T-cell (primary cell): ENCODE measurements at regions of chr1 and their contacts with region 1.

Region 1: GRCh38 chr1:184805667-184806295 is 51.1 kb upstream of the EDEM3 start:
- DNase-seq: peak; percentile 48 to 92 (median 76)
- ATAC-seq: peak; percentile 90 to 96 (median 94)
- H3K4me3 ChIP-seq: no peak overlapping the region
- H3K4me3 Mint-ChIP-seq: no peak overlapping the region
- H3K27ac ChIP-seq: no peak overlapping the region
- H3K27ac Mint-ChIP-seq: peak overlapping the region; percentile 2 to 8
- H3K4me1 ChIP-seq: peaks cover 3 to 5% of the 10 kb centered on the region in 2 experiments
- H3K4me1 Mint-ChIP-seq: peaks cover 5 to 6% (median 6%) of the 10 kb centered on the region in 3 donors
- H3K27me3 ChIP-seq: no peaks in the 10 kb centered on the region
- H3K27me3 Mint-ChIP-seq: no peaks in the 10 kb centered on the region

Region 2: GRCh38 chr1:184424157-184424556 is 381.6 kb before region 1 on chr1:
- CTCF ChIA-PET with region 1: no interaction called
- POLR2A ChIA-PET with region 1: no interaction called
- DNase-seq: no peak
- ATAC-seq: no peak
- H3K4me3 ChIP-seq: no peak overlapping the region
- H3K4me3 Mint-ChIP-seq: no peak overlapping the region
- H3K27ac ChIP-seq: no peak overlapping the region
- H3K27ac Mint-ChIP-seq: no peak overlapping the region
- H3K4me1 ChIP-seq: no peaks in the 10 kb centered on the region
- H3K4me1 Mint-ChIP-seq: peaks cover 0 to 3% (median 0%) of the 10 kb centered on the region in 3 donors
- H3K27me3 ChIP-seq: no peaks in the 10 kb centered on the region
- H3K27me3 Mint-ChIP-seq: peaks cover 6 to 11% of the 10 kb centered on the region in 2 donors

Region 3: DNA sequence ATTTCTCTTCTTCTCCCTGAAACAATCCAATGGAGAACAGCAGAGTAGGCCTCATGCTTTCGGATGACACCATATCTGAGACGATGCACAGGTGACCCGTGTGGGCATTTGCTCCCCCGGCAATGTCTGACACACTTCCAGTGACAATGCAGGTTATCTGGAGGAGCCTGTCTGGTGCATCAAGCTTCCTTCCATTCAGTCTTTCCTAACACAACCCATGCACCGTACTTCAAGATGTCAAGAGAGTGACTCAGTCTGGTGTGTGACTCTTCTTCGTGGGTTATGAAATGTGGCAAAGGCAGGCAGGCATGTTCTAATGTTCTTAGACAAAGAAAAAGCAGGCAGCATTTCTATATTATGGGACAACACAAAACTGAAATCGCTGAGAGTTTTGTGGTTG is 210.2 kb before region 1 on chr1:
- CTCF ChIA-PET with region 1: no interaction called
- POLR2A ChIA-PET with region 1: no interaction called
- DNase-seq: no peak
- ATAC-seq: no peak
- H3K4me3 ChIP-seq: no peak overlapping the region
- H3K4me3 Mint-ChIP-seq: no peak overlapping the region
- H3K27ac ChIP-seq: no peak overlapping the region
- H3K27ac Mint-ChIP-seq: no peak overlapping the region
- H3K4me1 ChIP-seq: no peaks in the 10 kb centered on the region
- H3K4me1 Mint-ChIP-seq: no peaks in the 10 kb centered on the region
- H3K27me3 ChIP-seq: no peaks in the 10 kb centered on the region
- H3K27me3 Mint-ChIP-seq: peaks cover 0 to 3% of the 10 kb centered on the region in 2 donors

Region 4: GRCh38 chr1:184754476-184755225 is 51.1 kb before region 1 on chr1 and contains the start of gene EDEM3:
- CTCF ChIA-PET with region 1: interaction called, 5 to 11 read pairs
- POLR2A ChIA-PET with region 1: interaction called in 1 of 2 experiments, 7 read pairs
- DNase-seq: peak; percentile 89 to 100 (median 98)
- ATAC-seq: peak; percentile 92 to 95 (median 93)
- H3K4me3 ChIP-seq: peak within 1 kb of the TSS; percentile 84 to 95
- H3K4me3 Mint-ChIP-seq: peak within 1 kb of the TSS; percentile 83 to 90 (median 88)
- H3K27ac ChIP-seq: peak within 1 kb of the TSS; percentile 73
- H3K27ac Mint-ChIP-seq: peak within 1 kb of the TSS; percentile 75 to 88
- H3K4me1 ChIP-seq: peaks cover 5 to 18% of the 10 kb centered on the region in 2 experiments
- H3K4me1 Mint-ChIP-seq: peaks cover 41 to 54% (median 50%) of the 10 kb centered on the region in 3 donors
- H3K27me3 ChIP-seq: no peaks in the 10 kb centered on the region
- H3K27me3 Mint-ChIP-seq: no peaks in the 10 kb centered on the region
- total RNA-seq, gene EDEM3: 21.0 to 44.1 (median 39.1) TPM

Region 5: DNA sequence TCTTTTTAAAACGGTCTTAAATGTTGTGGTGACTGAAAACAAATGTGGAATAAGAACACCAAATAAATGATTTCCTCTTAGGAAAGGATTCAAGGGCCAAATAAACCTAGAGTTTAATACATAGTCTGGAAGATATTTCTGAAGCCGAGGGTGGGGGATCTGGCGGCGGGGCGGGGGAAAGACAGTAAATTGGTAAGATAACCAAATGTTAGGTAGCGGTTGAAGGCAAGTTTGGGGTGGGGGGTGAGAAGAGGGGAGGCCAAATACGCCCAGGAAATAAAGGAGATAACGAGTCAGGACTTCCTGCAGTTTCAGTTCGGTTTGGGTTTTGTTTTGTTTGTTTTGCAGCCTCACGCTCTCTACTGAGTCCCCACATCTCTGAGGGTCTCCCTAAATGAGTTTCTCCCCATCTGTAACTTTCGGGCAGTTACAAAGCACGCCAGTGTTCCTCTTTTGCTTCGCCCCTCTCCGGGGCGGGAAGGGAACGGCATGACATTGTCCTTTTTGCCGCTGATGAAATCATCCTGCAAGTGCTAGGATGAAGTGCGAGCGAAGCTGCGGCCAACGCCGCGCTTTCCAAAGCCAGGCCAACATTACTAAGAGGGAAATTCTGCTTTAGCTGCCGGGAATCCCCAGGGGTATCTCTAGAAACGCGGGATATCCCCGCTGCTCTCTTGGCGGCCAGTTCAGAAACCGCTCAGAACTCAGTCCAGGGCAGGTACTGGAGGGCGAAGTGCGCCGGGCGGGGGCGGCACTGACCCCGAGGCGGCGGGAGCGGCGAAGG is 167.7 kb after region 1 on chr1:
- CTCF ChIA-PET with region 1: interaction called, 3 to 16 read pairs
- POLR2A ChIA-PET with region 1: interaction called in 1 of 2 experiments, 3 read pairs
- DNase-seq: peak in 31 of 35 experiments; percentile 1 to 82 (median 33)
- ATAC-seq: peak; percentile 13 to 75 (median 30)
- H3K4me3 ChIP-seq: peak overlapping the region; percentile 67 to 83
- H3K4me3 Mint-ChIP-seq: peak overlapping the region; percentile 90 to 94 (median 91)
- H3K27ac ChIP-seq: peak overlapping the region; percentile 90
- H3K27ac Mint-ChIP-seq: peak overlapping the region; percentile 91 to 92
- H3K4me1 ChIP-seq: peaks cover 7 to 33% of the 10 kb centered on the region in 2 experiments
- H3K4me1 Mint-ChIP-seq: peaks cover 25 to 64% (median 57%) of the 10 kb centered on the region in 3 donors
- H3K27me3 ChIP-seq: no peaks in the 10 kb centered on the region
- H3K27me3 Mint-ChIP-seq: peaks cover 7 to 17% of the 10 kb centered on the region in 2 donors

Region 6: DNA sequence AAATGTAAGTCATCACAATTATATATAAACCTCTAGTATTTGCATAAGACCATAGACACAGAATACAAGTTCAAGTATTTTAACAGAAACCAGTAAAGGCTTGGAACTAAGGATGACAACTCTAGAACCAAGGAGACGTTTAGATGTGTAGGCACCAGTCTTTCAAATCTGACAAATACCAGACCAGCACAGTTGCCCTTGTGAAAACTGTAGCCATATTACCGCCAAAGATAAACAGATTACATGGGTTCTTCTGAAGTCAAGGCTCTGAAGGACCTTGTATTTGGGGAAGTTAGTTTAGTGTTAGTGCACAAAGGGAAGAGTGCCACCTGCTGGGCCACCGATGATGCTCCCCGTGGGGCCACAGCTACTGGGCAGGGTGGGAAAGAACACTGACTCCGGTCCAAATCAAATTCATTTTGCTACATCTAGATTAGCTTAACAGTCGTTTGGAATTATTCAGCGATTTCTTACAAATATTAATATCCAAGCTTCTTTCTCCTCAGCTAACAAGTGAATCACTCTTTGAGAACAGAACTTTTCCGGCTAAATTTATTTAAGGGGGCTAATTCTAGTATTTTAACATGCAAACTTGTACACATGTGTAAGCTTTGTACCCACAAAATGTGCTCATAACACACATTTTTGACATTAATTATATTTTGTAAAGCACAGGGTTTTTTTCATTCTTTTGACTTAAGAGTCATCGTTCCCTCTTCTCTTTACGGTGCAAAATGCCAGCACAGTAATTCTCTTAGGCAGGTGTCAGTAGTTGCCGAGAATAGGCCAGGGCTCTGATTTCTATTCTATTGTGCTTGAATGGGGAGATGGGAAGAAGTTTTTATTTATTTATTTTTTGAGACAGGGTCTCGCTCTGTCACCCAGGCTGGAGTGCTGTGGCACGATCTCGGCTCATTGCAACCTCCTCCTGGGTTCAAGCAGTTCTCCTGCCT is 176.5 kb after region 1 on chr1:
- CTCF ChIA-PET with region 1: interaction called, 49 to 96 read pairs
- POLR2A ChIA-PET with region 1: interaction called in 1 of 2 experiments, 3 read pairs
- DNase-seq: peak; percentile 40 to 85 (median 67)
- ATAC-seq: peak; percentile 90 to 99 (median 92)
- H3K4me3 ChIP-seq: no peak overlapping the region
- H3K4me3 Mint-ChIP-seq: no peak overlapping the region
- H3K27ac ChIP-seq: no peak overlapping the region
- H3K27ac Mint-ChIP-seq: no peak overlapping the region
- H3K4me1 ChIP-seq: no peaks in the 10 kb centered on the region
- H3K4me1 Mint-ChIP-seq: peaks cover 0 to 7% (median 5%) of the 10 kb centered on the region in 3 donors
- H3K27me3 ChIP-seq: peaks cover 0 to 4% of the 10 kb centered on the region in 2 experiments
- H3K27me3 Mint-ChIP-seq: peaks cover 5 to 29% of the 10 kb centered on the region in 2 donors

Region 7: GRCh38 chr1:185170291-185170848 is 364.6 kb after region 1 on chr1:
- CTCF ChIA-PET with region 1: interaction called, 12 to 16 read pairs
- POLR2A ChIA-PET with region 1: interaction called in 1 of 2 experiments, 5 read pairs
- DNase-seq: peak in 31 of 35 experiments; percentile 1 to 72 (median 21)
- ATAC-seq: peak; percentile 82 to 87 (median 84)
- H3K4me3 ChIP-seq: no peak overlapping the region
- H3K4me3 Mint-ChIP-seq: no peak overlapping the region
- H3K27ac ChIP-seq: no peak overlapping the region
- H3K27ac Mint-ChIP-seq: no peak overlapping the region
- H3K4me1 ChIP-seq: peaks cover 0 to 3% of the 10 kb centered on the region in 2 experiments
- H3K4me1 Mint-ChIP-seq: peaks cover 4 to 7% (median 5%) of the 10 kb centered on the region in 3 donors
- H3K27me3 ChIP-seq: no peaks in the 10 kb centered on the region
- H3K27me3 Mint-ChIP-seq: no peaks in the 10 kb centered on the region

Region 8: GRCh38 chr1:185681034-185681633 is 875.4 kb after region 1 on chr1:
- CTCF ChIA-PET with region 1: interaction called, 4 to 11 read pairs
- POLR2A ChIA-PET with region 1: no interaction called
- DNase-seq: peak in 3 of 35 experiments; percentile 8 to 69 (median 9)
- ATAC-seq: peak; percentile 41 to 64 (median 52)
- H3K4me3 ChIP-seq: no peak overlapping the region
- H3K4me3 Mint-ChIP-seq: no peak overlapping the region
- H3K27ac ChIP-seq: no peak overlapping the region
- H3K27ac Mint-ChIP-seq: no peak overlapping the region
- H3K4me1 ChIP-seq: peaks cover 7 to 18% of the 10 kb centered on the region in 2 experiments
- H3K4me1 Mint-ChIP-seq: peaks cover 25 to 36% (median 34%) of the 10 kb centered on the region in 3 donors
- H3K27me3 ChIP-seq: no peaks in the 10 kb centered on the region
- H3K27me3 Mint-ChIP-seq: peaks cover 0 to 4% of the 10 kb centered on the region in 2 donors